ENCODE measurements at regions of chr1 and their contacts with region 1.

Region 1: DNA sequence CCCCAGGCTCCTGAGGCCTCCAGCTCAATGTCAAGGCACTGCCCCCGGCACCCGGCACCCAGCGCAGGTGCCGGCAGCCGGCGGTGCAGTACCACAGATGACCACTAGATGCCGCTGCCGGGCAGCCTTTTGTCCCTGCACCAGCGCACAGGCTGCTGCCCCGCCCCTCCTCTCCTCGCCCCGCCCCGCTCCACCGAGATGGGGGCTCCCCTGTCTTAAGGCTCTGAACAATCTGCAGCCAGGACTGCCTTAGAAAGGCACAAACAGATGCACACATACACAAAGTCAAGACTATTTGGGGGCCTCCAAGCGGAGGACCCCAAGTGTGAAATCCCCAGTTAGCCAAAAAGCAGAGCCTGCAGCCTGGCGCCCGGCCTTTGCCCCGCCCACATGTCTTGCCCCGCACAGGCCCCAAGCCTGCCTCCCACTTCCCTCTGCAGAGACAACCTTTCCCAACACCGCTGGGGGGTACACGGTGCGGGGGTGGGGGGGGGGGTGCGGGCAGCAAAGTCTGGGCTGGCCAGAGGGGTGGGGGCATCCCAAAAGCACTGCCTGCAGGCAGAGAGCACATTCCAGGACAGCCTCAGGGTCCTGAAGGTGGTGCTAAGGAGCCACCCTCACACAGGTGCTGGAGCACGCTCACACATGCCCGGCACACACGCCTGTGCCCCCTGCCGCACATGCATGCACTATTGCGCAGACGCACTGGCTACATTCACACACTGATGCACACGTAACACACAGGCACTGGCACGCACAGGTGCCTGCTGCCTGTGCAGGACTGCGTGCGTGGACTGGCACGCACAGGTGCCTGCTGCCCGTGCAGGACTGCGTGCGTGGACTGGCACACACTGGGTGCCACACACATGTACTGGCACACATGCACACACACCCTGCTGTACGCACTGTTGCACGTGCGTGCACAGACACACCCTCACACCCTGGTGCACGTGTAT is 37.1 kb downstream of the ARHGEF16 start:
- DNase-seq: peak; percentile 82 to 94
- ATAC-seq: peak; percentile 88
- H3K4me3 ChIP-seq: no peak overlapping the region
- H3K27ac ChIP-seq: no peak overlapping the region
- H3K4me1 ChIP-seq: no peaks in the 10 kb centered on the region
- H3K27me3 ChIP-seq: no peaks in the 10 kb centered on the region

Region 2: GRCh38 chr1:3292868-3293562 is 198.6 kb before region 1 on chr1:
- intact Hi-C with region 1: no loop called
- DNase-seq: no peak
- ATAC-seq: no peak
- H3K4me3 ChIP-seq: no peak overlapping the region
- H3K27ac ChIP-seq: no peak overlapping the region
- H3K4me1 ChIP-seq: no peaks in the 10 kb centered on the region
- H3K27me3 ChIP-seq: no peaks in the 10 kb centered on the region

Region 3: DNA sequence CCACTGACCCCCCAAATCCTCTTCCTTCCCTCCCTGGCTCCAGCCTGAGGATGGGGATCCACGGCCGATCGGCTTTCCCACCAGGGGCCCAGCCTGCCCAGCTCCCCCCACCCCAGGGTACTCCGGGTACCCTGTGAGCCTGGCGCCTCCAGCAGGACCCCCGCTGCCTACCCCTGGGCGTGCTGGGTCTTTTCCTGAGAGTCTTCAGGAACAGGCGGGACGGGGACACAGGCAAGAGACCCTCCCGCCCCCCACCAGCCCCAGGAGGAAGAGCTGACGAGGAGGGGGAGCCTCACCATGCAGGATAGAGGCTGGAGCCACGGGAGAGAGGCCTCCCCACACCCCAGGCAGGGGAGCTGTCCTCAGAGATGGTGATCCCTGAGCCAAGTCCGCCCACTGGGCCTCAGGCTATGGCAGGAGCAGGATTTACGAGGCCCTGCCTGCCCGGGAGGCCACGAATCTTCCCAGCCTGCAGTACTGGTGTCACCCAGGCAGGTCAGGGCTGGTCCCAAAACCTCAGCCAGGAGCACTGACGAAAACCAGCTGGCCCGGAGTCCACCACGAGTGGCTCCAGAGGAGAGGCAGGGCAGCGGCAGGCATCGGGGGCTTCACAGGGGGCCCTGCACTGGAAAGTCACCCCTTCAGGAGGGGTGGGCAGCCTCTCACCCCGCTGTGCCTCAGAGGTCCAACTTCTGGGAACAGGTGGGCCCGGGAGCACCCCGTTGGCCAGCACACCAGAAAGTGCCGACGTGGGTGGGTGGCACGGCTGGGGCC is 61.8 kb after region 1 on chr1:
- intact Hi-C with region 1: loop called (anchors 1 to 5 kb)
- DNase-seq: no peak
- ATAC-seq: no peak
- H3K4me3 ChIP-seq: no peak overlapping the region
- H3K27ac ChIP-seq: no peak overlapping the region
- H3K4me1 ChIP-seq: peaks cover 0 to 3% of the 10 kb centered on the region in 2 donors
- H3K27me3 ChIP-seq: no peaks in the 10 kb centered on the region

Region 4: DNA sequence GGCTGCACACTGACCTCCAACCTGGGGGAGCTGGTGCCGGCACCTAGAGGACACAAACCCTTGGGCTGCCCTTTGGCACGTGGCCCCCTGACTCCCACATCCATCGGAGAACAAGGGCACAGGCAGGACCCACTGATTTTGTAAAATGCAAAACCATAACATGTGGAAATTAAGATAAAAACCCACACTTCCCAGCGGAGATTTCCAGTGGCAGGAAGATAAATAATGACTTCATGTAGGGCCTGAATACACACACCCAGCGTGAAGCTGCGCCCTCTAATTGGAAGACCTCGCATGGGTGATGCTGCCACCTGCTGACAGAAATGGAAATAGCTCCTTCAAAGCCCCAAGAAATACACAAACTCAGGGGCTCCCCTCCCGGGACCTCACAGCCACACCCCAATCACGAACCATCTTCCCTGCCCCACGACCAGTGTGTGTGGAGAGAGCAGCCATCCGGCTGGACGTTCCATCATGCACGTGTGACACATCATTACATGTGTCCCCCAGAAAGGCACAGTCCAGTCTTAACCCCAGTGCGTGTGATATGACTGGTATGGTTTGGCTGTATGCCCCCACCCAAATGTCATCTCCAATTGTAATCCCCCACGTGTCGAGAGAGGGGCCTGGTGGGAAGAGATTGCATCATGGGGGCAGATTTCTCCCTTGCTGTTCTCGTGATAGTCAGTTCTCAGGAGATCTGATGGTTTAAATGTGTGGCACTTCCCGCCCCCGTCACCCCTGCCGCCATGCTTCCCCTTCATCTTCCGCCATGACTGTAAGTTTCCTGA is 127.5 kb after region 1 on chr1:
- intact Hi-C with region 1: loop called (anchors 1 to 2 kb)
- DNase-seq: peak in 1 of 2 donors; percentile 78
- ATAC-seq: peak; percentile 79
- H3K4me3 ChIP-seq: no peak overlapping the region
- H3K27ac ChIP-seq: no peak overlapping the region
- H3K4me1 ChIP-seq: no peaks in the 10 kb centered on the region
- H3K27me3 ChIP-seq: no peaks in the 10 kb centered on the region

Region 5: DNA sequence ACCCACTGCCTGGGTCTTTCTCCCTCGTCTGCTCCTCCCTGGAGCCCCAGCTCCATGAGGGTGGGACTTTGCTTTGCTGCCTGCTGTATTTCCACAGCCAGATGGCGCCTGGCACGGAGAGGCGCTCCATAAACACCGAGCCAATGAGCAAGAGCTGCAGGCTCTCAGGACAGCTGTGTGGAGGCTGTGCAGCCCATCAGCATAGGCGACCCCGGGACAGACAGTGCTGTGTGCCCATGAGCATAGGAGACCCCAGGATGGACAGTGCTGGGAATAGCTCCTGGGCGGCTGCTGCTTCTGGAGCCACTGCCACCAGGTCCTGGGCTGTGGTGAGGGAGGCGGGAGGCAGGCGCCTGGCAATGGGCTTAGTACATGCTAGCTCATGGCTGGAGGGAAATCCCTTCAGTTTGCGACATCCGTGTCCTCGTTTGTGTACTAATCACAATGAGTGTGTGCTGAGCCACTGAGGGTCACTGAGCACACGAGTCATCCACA is 336.3 kb after region 1 on chr1:
- intact Hi-C with region 1: no loop called
- DNase-seq: peak in 1 of 2 donors; percentile 64
- ATAC-seq: no peak
- H3K4me3 ChIP-seq: no peak overlapping the region
- H3K27ac ChIP-seq: no peak overlapping the region
- H3K4me1 ChIP-seq: no peaks in the 10 kb centered on the region
- H3K27me3 ChIP-seq: no peaks in the 10 kb centered on the region